Naive thymus-derived CD8-positive, alpha-beta T cell (primary cell): ENCODE measurements at regions of chr2 and their contacts with region 1.

Region 1: DNA sequence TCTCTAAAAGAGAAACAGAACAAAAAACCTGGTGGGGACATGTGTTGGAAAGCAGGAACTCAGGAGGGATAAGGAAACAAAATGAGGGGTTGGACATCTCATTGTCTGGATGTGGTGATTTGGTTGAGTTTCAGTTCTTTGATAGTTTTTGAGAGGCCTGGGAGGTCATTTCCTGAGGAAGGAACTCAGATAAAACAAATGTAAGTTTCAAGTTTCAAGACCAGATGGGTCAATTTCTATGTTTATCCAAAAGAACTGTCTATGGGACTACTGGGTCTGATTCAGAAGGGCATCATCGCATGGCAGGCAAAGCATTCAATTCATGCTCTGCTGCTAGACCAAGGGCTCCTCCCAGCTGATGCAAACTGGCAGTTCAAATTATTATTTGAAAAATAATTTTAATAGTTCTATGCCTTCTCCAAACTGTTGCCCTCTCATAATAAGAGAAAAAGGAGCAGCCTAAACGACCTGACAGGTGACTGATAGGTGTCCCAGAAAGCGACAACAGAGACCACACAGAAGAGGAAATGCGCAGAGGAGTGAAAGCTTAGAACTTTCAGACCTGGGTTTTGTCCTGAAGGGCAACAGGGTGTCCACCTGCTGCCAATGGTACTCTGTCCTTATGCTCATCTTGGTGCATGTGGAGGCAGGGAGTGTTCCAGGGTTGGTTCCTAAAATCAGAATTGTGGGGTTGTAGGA is 39.3 kb upstream of the SH3RF3 start:
- DNase-seq: no peak
- ATAC-seq: no peak
- H3K4me3 Mint-ChIP-seq: no peak overlapping the region
- H3K27ac Mint-ChIP-seq: peak overlapping the region in 1 of 10 donors; percentile 27
- H3K4me1 Mint-ChIP-seq: peaks cover 2 to 14% (median 10%) of the 10 kb centered on the region in 4 donors
- H3K27me3 Mint-ChIP-seq: no peaks in the 10 kb centered on the region

Region 2: DNA sequence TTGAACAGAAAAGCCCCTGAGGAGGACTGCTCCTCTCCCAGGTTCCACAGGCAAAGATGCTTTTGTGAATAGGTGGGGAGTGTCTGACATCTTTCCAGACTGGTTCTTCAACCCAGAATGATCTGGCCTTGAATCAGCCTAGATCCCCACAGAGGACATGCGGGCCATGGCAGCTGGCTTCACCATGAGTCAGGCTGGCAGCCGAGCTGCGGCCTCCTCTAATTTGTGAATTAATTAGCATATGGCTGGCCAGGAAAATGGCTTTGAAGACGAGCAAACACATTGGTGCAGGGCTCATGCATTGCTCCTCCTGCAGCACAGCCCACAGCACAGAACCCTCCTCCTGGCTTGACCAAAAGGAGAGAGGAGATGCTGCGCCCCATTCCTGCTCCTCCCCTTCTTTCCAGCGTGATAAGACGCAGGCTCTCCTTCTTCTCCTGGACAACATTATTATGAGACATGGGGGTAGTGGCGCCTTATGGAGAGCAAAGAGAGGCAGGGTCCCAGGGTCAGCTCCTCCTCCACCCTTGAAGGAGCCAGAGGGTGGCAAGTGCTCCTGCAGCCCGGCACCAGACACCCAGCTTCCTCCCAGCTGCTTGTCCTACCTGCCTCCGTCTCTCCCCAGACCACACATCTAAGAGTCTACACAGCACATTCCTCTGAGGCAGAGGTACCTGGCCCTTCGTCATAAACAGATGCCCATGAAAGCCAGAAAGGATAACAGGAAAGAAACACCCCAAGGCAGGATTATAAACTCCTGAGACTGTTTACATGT is 167.4 kb before region 1 on chr2:
- POLR2A ChIA-PET with region 1: no interaction called
- DNase-seq: peak in 1 of 10 donors; percentile 28
- ATAC-seq: no peak
- H3K4me3 Mint-ChIP-seq: no peak overlapping the region
- H3K27ac Mint-ChIP-seq: peak overlapping the region in 2 of 10 donors; percentile 18 to 37
- H3K4me1 Mint-ChIP-seq: peaks cover 0 to 4% (median 3%) of the 10 kb centered on the region in 4 donors
- H3K27me3 Mint-ChIP-seq: no peaks in the 10 kb centered on the region

Region 3: DNA sequence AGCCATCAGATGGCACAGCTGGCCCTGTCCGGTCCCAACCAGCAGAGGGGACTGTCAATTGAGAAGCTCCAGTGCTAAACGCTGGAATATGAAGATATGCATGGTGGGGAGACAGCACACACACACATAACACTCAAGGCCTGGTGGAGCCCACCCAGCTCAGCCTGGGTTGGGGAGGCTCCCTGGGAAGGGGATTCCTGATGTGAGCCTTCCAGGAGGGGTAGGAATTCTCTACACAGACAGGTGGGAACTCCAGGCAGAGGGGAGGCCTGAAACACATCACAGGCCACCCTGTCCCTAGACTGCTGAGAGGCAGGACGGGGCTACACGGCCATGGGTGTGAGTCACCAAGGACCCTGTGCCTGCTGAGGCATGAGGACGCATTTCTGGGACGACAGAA is 10.2 kb before region 1 on chr2:
- POLR2A ChIA-PET with region 1: no interaction called
- DNase-seq: no peak
- ATAC-seq: no peak
- H3K4me3 Mint-ChIP-seq: no peak overlapping the region
- H3K27ac Mint-ChIP-seq: peak overlapping the region in 3 of 10 donors; percentile 6 to 92 (median 24)
- H3K4me1 Mint-ChIP-seq: peaks cover 7 to 19% (median 10%) of the 10 kb centered on the region in 4 donors
- H3K27me3 Mint-ChIP-seq: no peaks in the 10 kb centered on the region

Region 4: DNA sequence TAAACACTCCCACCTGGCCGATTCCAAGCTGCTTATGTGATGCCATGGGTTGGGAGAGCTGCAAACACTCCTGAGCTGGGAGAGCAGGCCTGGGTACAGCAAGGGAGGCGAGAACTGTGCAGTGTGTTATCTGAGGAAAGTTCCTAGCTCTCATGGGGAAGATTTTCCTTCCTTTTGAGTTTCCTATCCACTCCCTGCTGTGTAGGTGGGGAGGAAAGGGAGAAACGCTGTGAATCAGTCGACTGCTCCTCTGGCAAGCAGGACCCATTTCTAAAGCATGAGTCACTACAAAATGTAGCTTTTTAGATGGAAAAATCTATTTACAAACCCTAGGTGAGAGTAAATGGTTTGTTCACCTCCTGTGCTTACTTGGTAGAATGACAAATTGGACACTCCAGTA is 119.7 kb after region 1 on chr2:
- POLR2A ChIA-PET with region 1: interaction called, 12 read pairs
- DNase-seq: no peak
- ATAC-seq: no peak
- H3K4me3 Mint-ChIP-seq: no peak overlapping the region
- H3K27ac Mint-ChIP-seq: no peak overlapping the region
- H3K4me1 Mint-ChIP-seq: peaks cover 29 to 49% (median 45%) of the 10 kb centered on the region in 4 donors
- H3K27me3 Mint-ChIP-seq: peaks cover 14 to 43% (median 23%) of the 10 kb centered on the region in 5 donors